Sigmoid colon (tissue), 7 donors: ENCODE measurements at regions of chr13 and their contacts with region 1.

Region 1: GRCh38 chr13:43786773-43787517 is at the start of gene ENOX1:
- DNase-seq: peak; percentile 90
- H3K4me3 ChIP-seq: peak within 1 kb of the TSS; percentile 79 to 89 (median 82)
- H3K27ac ChIP-seq: peak within 1 kb of the TSS; percentile 89 to 93 (median 92)
- H3K4me1 ChIP-seq: peaks cover 0 to 38% (median 22%) of the 10 kb centered on the region in 4 donors
- H3K27me3 ChIP-seq: no peaks in the 10 kb centered on the region
- CTCF ChIP-seq: peak in 1 of 4 experiments; percentile 32
- EP300 ChIP-seq: no peak
- POLR2A ChIP-seq: no peak
- total RNA-seq, gene ENOX1: 11.1 to 20.2 (median 15.0) TPM

Region 2: GRCh38 chr13:42859760-42860159 is 927.2 kb before region 1 on chr13:
- intact Hi-C with region 1: no loop called
- DNase-seq: no peak
- H3K4me3 ChIP-seq: no peak overlapping the region
- H3K27ac ChIP-seq: no peak overlapping the region
- H3K4me1 ChIP-seq: no peaks in the 10 kb centered on the region
- H3K27me3 ChIP-seq: no peaks in the 10 kb centered on the region
- CTCF ChIP-seq: no peak
- EP300 ChIP-seq: no peak
- POLR2A ChIP-seq: no peak

Region 3: GRCh38 chr13:43159026-43159461 is 627.9 kb before region 1 on chr13:
- intact Hi-C with region 1: no loop called
- DNase-seq: no peak
- H3K4me3 ChIP-seq: no peak overlapping the region
- H3K27ac ChIP-seq: no peak overlapping the region
- H3K4me1 ChIP-seq: no peaks in the 10 kb centered on the region
- H3K27me3 ChIP-seq: no peaks in the 10 kb centered on the region
- CTCF ChIP-seq: no peak
- EP300 ChIP-seq: no peak
- POLR2A ChIP-seq: no peak

Region 4: GRCh38 chr13:43368003-43368402 is 418.9 kb before region 1 on chr13:
- intact Hi-C with region 1: loop called (anchors 5 kb)
- DNase-seq: no peak
- H3K4me3 ChIP-seq: peak overlapping the region; percentile 4 to 27 (median 12)
- H3K27ac ChIP-seq: peak overlapping the region; percentile 44 to 73 (median 65)
- H3K4me1 ChIP-seq: peaks cover 0 to 71% (median 58%) of the 10 kb centered on the region in 4 donors
- H3K27me3 ChIP-seq: no peaks in the 10 kb centered on the region
- CTCF ChIP-seq: no peak
- EP300 ChIP-seq: no peak
- POLR2A ChIP-seq: no peak

Region 5: DNA sequence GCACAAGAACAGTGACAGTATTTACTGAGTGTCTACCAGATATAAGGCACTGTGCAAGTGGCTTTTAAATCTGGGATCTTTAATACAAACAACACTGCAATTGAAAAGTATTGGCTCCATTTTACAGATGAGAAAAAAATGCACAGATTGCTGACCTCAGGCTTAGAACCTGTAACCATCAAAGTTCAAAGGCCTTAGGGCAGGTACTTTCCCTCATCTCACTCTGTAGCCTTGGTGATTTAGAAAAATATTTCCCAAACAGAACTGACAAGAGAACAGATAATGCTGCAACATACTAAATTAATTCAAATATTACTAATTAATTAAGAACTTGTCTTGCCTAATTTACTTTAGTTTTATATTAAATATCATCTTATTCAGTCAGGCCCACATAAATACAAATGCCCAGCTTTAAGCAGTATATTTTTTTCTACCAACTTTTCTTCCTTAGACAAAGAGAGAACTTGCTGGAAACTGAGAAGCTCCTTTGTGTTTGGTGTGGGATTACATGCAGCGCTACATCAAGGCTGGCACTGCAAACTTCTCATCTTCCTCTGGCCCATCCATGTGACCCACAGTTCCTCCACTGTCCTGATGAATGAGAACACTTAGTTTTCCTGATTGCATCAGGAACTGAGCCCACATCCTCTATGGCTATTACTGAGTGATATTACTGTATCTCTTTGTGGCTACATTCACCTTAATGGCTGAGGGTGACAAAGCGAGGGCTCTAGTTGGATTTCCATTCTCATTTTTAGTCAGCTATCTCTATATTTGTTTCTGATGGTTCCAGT is 302.3 kb before region 1 on chr13:
- intact Hi-C with region 1: loop called (anchors 5 kb)
- DNase-seq: no peak
- H3K4me3 ChIP-seq: no peak overlapping the region
- H3K27ac ChIP-seq: peak overlapping the region in 3 of 4 donors; percentile 6 to 70 (median 17)
- H3K4me1 ChIP-seq: peaks cover 0 to 49% (median 30%) of the 10 kb centered on the region in 4 donors
- H3K27me3 ChIP-seq: no peaks in the 10 kb centered on the region
- CTCF ChIP-seq: no peak
- EP300 ChIP-seq: no peak
- POLR2A ChIP-seq: no peak

Region 6: GRCh38 chr13:43572656-43573367 is 214.1 kb before region 1 on chr13:
- intact Hi-C with region 1: loop called (anchors 5 kb)
- DNase-seq: no peak
- H3K4me3 ChIP-seq: no peak overlapping the region
- H3K27ac ChIP-seq: peak overlapping the region in 3 of 4 donors; percentile 32 to 48 (median 46)
- H3K4me1 ChIP-seq: peaks cover 0 to 55% (median 35%) of the 10 kb centered on the region in 4 donors
- H3K27me3 ChIP-seq: no peaks in the 10 kb centered on the region
- CTCF ChIP-seq: no peak
- EP300 ChIP-seq: no peak
- POLR2A ChIP-seq: no peak

Region 7: GRCh38 chr13:43686557-43686956 is 100.4 kb before region 1 on chr13:
- intact Hi-C with region 1: loop called (anchors 5 kb)
- DNase-seq: peak; percentile 77
- H3K4me3 ChIP-seq: no peak overlapping the region
- H3K27ac ChIP-seq: peak overlapping the region; percentile 58 to 78 (median 74)
- H3K4me1 ChIP-seq: peaks cover 0 to 80% (median 49%) of the 10 kb centered on the region in 4 donors
- H3K27me3 ChIP-seq: no peaks in the 10 kb centered on the region
- CTCF ChIP-seq: no peak
- EP300 ChIP-seq: no peak
- POLR2A ChIP-seq: no peak